HepG2 (cell line): ENCODE measurements at regions of chr3 and their contacts with region 1.

Region 1: GRCh38 chr3:155619118-155619915 is 125.6 kb downstream of the PLCH1 start:
- DNase-seq: no peak
- ATAC-seq: peak; percentile 79
- H3K4me3 ChIP-seq: no peak overlapping the region
- H3K27ac ChIP-seq: no peak overlapping the region
- H3K4me1 ChIP-seq: peaks cover 76% of the 10 kb centered on the region
- H3K27me3 ChIP-seq: no peaks in the 10 kb centered on the region
- CTCF ChIP-seq: no peak
- EP300 ChIP-seq: no peak
- POLR2A ChIP-seq: no peak
- RAD21 ChIP-seq: no peak

Region 2: GRCh38 chr3:155664925-155665695 is 45.8 kb after region 1 on chr3:
- CTCF ChIA-PET with region 1: no interaction called
- POLR2A ChIA-PET with region 1: interaction called, 3 read pairs
- in situ Hi-C with region 1: no loop called
- intact Hi-C with region 1: loop called (anchors 5 kb)
- DNase-seq: peak; percentile 65
- ATAC-seq: peak; percentile 83
- H3K4me3 ChIP-seq: peak overlapping the region in 1 of 3 experiments; percentile 18; a peak in 2 of 6 replicates
- H3K27ac ChIP-seq: peak overlapping the region; percentile 32
- H3K4me1 ChIP-seq: peaks cover 82% of the 10 kb centered on the region
- H3K27me3 ChIP-seq: no peaks in the 10 kb centered on the region
- CTCF ChIP-seq: no peak
- EP300 ChIP-seq: 0 out of 4 replicates have a peak, but pooled peaks of 1 of the 2 experiments have one; percentile 28
- POLR2A ChIP-seq: no peak
- RAD21 ChIP-seq: no peak

Region 3: GRCh38 chr3:156382458-156383346 is 763.4 kb after region 1 on chr3:
- CTCF ChIA-PET with region 1: no interaction called
- POLR2A ChIA-PET with region 1: no interaction called
- in situ Hi-C with region 1: no loop called
- intact Hi-C with region 1: no loop called
- DNase-seq: peak; percentile 24
- ATAC-seq: peak; percentile 96
- H3K4me3 ChIP-seq: no peak overlapping the region
- H3K27ac ChIP-seq: no peak overlapping the region
- H3K4me1 ChIP-seq: no peaks in the 10 kb centered on the region
- H3K27me3 ChIP-seq: 0 out of 5 replicates have a peak, but pooled peaks cover 0 to 3% of the 10 kb centered on the region in 2 experiments
- CTCF ChIP-seq: peak; percentile 77
- EP300 ChIP-seq: no peak
- POLR2A ChIP-seq: no peak
- RAD21 ChIP-seq: peak; percentile 70